Activated CD8-positive, alpha-beta T cell treated with anti-CD3 and anti-CD28 coated beads, Interleukin-2, amount 10 ng/mL, durations not matched to agents 7 days and 5 days (primary cell): ENCODE measurements at regions of chr20 and their contacts with region 1.

Region 1: DNA sequence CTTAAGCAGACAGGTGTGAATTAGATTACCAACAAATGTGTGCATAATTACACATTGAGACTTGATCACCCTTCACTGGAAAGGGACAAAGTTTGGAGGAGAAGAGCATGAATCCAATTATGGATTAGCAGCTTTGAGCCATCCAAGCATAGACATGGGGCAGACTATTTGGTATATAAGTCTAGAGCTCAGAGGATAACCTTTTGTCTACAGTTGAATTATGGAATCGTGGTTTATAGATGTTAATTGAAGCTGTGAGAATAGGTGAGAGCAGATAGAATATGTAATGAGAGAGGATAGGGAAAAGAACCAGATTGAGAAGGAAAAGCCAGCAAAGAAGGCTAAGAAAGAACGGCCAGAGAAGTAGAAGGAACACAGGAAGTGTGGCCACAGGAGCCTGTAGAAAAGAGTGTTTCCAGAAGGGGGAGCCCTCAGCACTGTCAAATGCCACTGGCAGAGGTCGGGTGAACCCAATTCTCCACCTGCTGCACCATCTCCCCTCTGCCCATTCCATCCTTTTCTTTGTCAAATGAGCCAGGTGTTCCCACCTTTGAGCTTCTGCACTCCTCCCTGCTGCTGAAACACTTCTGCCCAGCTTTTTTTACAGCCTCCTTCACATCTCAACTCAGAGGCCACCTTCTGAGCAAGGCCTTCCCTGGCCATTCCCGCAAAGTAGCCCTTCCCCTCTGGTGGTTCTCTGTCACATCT is 7.3 kb downstream of the DNTTIP1 start:
- DNase-seq: peak; percentile 82
- ATAC-seq: peak; percentile 94
- H3K4me3 Mint-ChIP-seq: no peak overlapping the region
- H3K27ac Mint-ChIP-seq: peak overlapping the region; percentile 77
- H3K4me1 Mint-ChIP-seq: peaks cover 12% of the 10 kb centered on the region
- H3K27me3 Mint-ChIP-seq: no peaks in the 10 kb centered on the region

Region 2: DNA sequence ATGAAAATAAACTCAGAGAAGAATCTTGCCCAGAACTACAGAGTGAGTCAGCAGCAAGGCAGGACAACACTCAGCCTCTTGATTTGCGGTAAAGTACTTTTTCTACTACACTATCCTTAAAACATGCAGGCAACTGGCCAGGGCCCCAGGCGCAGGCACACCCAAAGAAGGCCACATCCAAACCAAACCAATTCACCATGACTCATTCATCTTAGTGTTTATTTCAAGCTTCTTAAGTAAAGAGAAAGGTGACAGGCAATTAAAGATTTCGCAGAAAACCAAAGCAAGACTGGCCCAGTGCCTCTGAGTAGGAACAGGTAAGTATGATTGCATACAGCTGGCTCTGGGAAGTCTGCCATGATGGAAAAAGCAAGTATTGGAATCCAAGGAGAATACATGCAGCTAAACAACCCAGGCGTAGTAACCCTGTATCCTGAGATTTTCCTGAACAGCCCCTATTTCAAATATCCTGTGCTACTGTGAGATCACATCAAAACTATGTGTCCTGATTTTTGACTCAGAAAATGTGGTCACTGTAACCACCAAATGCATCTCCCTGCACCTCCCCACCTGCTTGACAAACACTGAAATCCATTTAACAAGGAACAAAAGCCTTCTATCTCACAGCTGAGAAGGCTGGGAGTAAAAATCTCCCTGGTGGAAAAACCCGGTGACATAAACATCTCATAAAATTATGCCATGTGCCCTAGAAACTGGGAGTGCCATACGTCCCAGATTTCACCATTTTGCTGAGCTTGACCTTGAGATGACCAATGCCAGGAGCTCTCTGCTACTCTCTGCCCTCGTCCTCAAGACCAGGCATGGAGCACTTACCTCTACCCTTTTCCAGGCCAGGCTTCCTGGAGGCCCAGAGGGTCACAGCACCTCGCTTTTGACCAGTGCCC is 19.8 kb before region 1 on chr20:
- CTCF ChIA-PET with region 1: interaction called, 12 read pairs
- POLR2A ChIA-PET with region 1: no interaction called
- DNase-seq: no peak
- ATAC-seq: no peak
- H3K4me3 Mint-ChIP-seq: no peak overlapping the region
- H3K27ac Mint-ChIP-seq: no peak overlapping the region
- H3K4me1 Mint-ChIP-seq: peaks cover 31% of the 10 kb centered on the region
- H3K27me3 Mint-ChIP-seq: peaks cover 11% of the 10 kb centered on the region

Region 3: DNA sequence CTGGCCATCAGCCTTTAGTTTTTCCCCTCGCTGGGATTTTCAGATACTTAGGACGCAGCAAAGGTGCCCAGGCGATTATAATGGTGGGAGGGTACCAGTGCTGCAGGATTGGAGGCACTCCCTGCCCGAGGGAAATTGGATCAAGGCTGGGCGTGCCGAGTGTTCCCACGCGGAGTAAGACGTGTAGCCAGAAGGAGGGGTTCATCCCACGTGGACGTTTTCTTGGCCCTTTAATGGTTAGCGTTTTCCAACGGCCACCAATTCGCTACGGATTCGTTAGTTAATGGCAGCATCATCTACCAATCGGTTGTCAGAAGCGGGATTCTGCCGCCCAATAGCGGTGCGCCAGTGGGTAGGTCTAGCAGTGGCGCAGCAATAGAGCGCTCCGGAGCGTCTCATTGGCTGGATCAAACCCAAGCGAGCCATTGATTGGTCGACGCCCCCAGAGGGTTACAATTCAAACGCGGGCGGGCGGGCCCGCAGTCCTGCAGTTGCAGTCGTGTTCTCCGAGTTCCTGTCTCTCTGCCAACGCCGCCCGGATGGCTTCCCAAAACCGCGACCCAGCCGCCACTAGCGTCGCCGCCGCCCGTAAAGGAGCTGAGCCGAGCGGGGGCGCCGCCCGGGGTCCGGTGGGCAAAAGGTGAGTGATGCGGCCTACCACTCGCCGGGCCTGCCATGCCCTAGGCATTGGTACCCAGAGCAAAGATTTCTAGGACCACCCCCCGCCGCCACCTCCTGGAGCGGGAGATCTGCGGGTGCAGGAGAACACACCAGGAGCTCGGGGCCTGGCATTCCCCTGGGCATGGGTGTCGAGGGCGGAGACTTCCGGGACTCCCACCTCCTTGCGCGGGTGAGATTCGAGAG is 13.3 kb after region 1 on chr20 and contains the start of gene UBE2C:
- CTCF ChIA-PET with region 1: interaction called, 24 read pairs
- POLR2A ChIA-PET with region 1: interaction called, 11 read pairs
- DNase-seq: peak; percentile 98
- ATAC-seq: peak; percentile 100
- H3K4me3 Mint-ChIP-seq: peak within 1 kb of the TSS; percentile 97
- H3K27ac Mint-ChIP-seq: peak within 1 kb of the TSS; percentile 91
- H3K4me1 Mint-ChIP-seq: peaks cover 34% of the 10 kb centered on the region
- H3K27me3 Mint-ChIP-seq: no peaks in the 10 kb centered on the region
- total RNA-seq, gene UBE2C: 251 to 261 TPM

Region 4: GRCh38 chr20:45963059-45964005 is 164.2 kb after region 1 on chr20:
- CTCF ChIA-PET with region 1: interaction called, 50 read pairs
- POLR2A ChIA-PET with region 1: no interaction called
- DNase-seq: no peak
- ATAC-seq: no peak
- H3K4me3 Mint-ChIP-seq: no peak overlapping the region
- H3K27ac Mint-ChIP-seq: no peak overlapping the region
- H3K4me1 Mint-ChIP-seq: peaks cover 5% of the 10 kb centered on the region
- H3K27me3 Mint-ChIP-seq: no peaks in the 10 kb centered on the region